ENCODE measurements at regions of chr2 and their contacts with region 1.

Region 1: DNA sequence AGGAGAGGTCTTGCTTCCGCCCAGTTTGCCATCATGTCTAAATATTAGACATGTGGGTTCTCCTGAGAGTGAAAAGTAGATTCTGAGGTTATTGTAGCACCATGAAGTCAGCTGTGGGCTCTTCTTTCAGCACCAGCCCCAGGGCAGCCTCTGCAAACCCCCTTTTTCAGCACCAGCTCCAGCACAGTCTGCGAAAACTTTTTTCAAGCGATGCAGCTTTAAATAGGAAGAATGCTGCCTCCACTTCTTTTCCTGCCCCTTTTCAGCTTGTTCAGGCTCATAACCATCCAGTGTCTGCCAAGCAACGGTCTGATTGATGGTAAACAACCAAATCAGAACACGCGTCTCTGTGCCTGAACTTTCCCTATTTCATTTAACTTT is at the start of gene COL5A2:
- DNase-seq: peak; percentile 71
- H3K4me3 ChIP-seq: peak within 1 kb of the TSS; percentile 66
- H3K4me3 Mint-ChIP-seq: peak within 1 kb of the TSS; percentile 92
- H3K27ac Mint-ChIP-seq: peak within 1 kb of the TSS; percentile 87
- H3K4me1 ChIP-seq: peaks cover 44% of the 10 kb centered on the region
- H3K4me1 Mint-ChIP-seq: peaks cover 37% of the 10 kb centered on the region
- H3K27me3 ChIP-seq: no peaks in the 10 kb centered on the region
- H3K27me3 Mint-ChIP-seq: no peaks in the 10 kb centered on the region
- CTCF ChIP-seq: no peak
- total RNA-seq, gene COL5A2: 190 and 244 TPM in 2 replicates

Region 2: GRCh38 chr2:189096769-189097447 is 82.7 kb before region 1 on chr2:
- CTCF ChIA-PET with region 1: no interaction called
- POLR2A ChIA-PET with region 1: no interaction called
- intact Hi-C with region 1: loop called (anchors 5 kb)
- DNase-seq: peak in 1 of 2 experiments; percentile 52
- H3K4me3 ChIP-seq: no peak overlapping the region
- H3K4me3 Mint-ChIP-seq: no peak overlapping the region
- H3K27ac Mint-ChIP-seq: peak overlapping the region; percentile 70
- H3K4me1 ChIP-seq: peaks cover 19% of the 10 kb centered on the region
- H3K4me1 Mint-ChIP-seq: peaks cover 21% of the 10 kb centered on the region
- H3K27me3 ChIP-seq: no peaks in the 10 kb centered on the region
- H3K27me3 Mint-ChIP-seq: no peaks in the 10 kb centered on the region
- CTCF ChIP-seq: no peak

Region 3: GRCh38 chr2:189142893-189143759 is 36.4 kb before region 1 on chr2:
- CTCF ChIA-PET with region 1: interaction called, 25 read pairs
- POLR2A ChIA-PET with region 1: no interaction called
- intact Hi-C with region 1: loop called (anchors 1 kb)
- DNase-seq: peak; percentile 75 to 80
- H3K4me3 ChIP-seq: no peak overlapping the region
- H3K4me3 Mint-ChIP-seq: no peak overlapping the region
- H3K27ac Mint-ChIP-seq: peak overlapping the region; percentile 17
- H3K4me1 ChIP-seq: peaks cover 12% of the 10 kb centered on the region
- H3K4me1 Mint-ChIP-seq: peaks cover 20% of the 10 kb centered on the region
- H3K27me3 ChIP-seq: no peaks in the 10 kb centered on the region
- H3K27me3 Mint-ChIP-seq: no peaks in the 10 kb centered on the region
- CTCF ChIP-seq: peak; percentile 93 to 99

Region 4: GRCh38 chr2:189163889-189164288 is 15.7 kb before region 1 on chr2:
- CTCF ChIA-PET with region 1: interaction called, 3 read pairs
- POLR2A ChIA-PET with region 1: no interaction called
- intact Hi-C with region 1: loop called (anchors 2 kb)
- DNase-seq: no peak
- H3K4me3 ChIP-seq: no peak overlapping the region
- H3K4me3 Mint-ChIP-seq: no peak overlapping the region
- H3K27ac Mint-ChIP-seq: peak overlapping the region; percentile 66
- H3K4me1 ChIP-seq: peaks cover 25% of the 10 kb centered on the region
- H3K4me1 Mint-ChIP-seq: peaks cover 22% of the 10 kb centered on the region
- H3K27me3 ChIP-seq: no peaks in the 10 kb centered on the region
- H3K27me3 Mint-ChIP-seq: no peaks in the 10 kb centered on the region
- CTCF ChIP-seq: no peak

Region 5: DNA sequence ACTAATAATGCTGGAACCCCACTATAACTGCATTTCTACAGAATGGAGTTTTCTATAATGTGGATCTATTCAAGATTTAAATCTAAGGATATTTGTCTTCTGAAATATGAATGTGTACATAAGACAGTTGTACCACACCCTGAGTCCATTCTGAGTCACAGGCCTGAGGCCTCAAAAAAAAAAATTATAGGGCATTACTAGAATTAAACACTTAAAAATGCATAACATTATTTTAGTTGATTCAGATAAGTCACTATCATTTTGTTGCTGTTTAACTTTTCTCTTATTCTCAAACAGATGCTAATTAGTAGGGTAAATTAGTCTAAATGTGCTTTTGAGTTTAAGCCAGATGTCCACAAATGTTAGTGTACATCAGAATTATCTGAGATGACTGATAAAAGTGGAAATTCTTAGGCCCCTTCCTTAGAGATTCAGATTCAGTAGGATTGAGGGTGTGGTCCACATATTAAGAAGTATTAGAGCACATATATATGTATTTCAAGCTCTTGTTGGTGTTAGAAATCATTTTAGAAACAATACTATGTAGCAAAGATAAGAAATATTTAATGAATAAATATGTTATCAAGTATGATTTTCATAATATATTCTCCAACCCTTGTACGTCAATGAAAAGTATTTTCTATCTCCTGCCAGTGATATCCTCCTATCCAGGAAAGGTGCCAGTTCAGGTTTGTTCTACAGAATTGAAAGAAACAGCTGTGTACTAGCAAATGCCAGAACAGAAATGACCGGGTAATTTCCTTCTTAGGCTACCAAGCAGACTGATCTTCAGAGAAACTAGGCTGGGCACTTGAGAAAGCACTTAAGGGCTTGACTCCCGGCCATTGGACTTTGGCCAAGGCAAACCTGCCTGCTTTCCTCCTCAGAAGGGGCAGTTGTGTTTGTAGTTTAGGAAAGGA is 42.6 kb after region 1 on chr2:
- CTCF ChIA-PET with region 1: no interaction called
- POLR2A ChIA-PET with region 1: no interaction called
- intact Hi-C with region 1: loop called (anchors 2 kb)
- DNase-seq: peak; percentile 18 to 43
- H3K4me3 ChIP-seq: no peak overlapping the region
- H3K4me3 Mint-ChIP-seq: no peak overlapping the region
- H3K27ac Mint-ChIP-seq: no peak overlapping the region
- H3K4me1 ChIP-seq: peaks cover 15% of the 10 kb centered on the region
- H3K4me1 Mint-ChIP-seq: peaks cover 22% of the 10 kb centered on the region
- H3K27me3 ChIP-seq: no peaks in the 10 kb centered on the region
- H3K27me3 Mint-ChIP-seq: no peaks in the 10 kb centered on the region
- CTCF ChIP-seq: no peak

Region 6: GRCh38 chr2:189287982-189288521 is 108.5 kb after region 1 on chr2:
- CTCF ChIA-PET with region 1: interaction called, 4 read pairs
- POLR2A ChIA-PET with region 1: no interaction called
- intact Hi-C with region 1: loop called (anchors 1 kb)
- DNase-seq: peak in 1 of 2 experiments; percentile 60
- H3K4me3 ChIP-seq: no peak overlapping the region
- H3K4me3 Mint-ChIP-seq: no peak overlapping the region
- H3K27ac Mint-ChIP-seq: no peak overlapping the region
- H3K4me1 ChIP-seq: peaks cover 5% of the 10 kb centered on the region; the same call in 1 of the 2 replicates
- H3K4me1 Mint-ChIP-seq: peaks cover 15% of the 10 kb centered on the region
- H3K27me3 ChIP-seq: no peaks in the 10 kb centered on the region
- H3K27me3 Mint-ChIP-seq: no peaks in the 10 kb centered on the region
- CTCF ChIP-seq: peak; percentile 38 to 64

Region 7: GRCh38 chr2:189379287-189379630 is 199.7 kb after region 1 on chr2:
- CTCF ChIA-PET with region 1: no interaction called
- POLR2A ChIA-PET with region 1: interaction called, 6 read pairs
- intact Hi-C with region 1: loop called (anchors 1 kb)
- DNase-seq: peak; percentile 74 to 81
- H3K4me3 ChIP-seq: no peak overlapping the region
- H3K4me3 Mint-ChIP-seq: peak overlapping the region; percentile 53
- H3K27ac Mint-ChIP-seq: peak overlapping the region; percentile 63
- H3K4me1 ChIP-seq: peaks cover 56% of the 10 kb centered on the region
- H3K4me1 Mint-ChIP-seq: peaks cover 29% of the 10 kb centered on the region
- H3K27me3 ChIP-seq: no peaks in the 10 kb centered on the region
- H3K27me3 Mint-ChIP-seq: no peaks in the 10 kb centered on the region
- CTCF ChIP-seq: no peak

Region 8: DNA sequence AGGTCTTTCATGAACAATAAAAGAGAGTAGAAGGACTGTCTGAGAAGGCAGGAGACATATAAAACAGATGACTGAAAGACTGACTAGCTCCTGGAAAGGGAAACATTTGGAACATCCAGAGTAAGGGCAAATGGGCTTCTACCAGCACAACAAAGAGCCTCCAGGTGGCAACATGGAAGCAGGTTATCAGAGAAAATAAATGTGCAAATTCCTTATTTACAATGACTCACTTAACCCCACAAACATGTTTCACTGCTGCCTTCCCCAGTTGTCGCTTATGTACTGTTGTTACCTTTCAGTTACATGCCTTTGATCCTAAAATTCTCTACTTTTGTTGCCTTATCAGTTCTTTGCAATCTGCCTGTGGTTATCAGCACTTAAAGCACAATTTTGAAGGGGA is 1023.0 kb after region 1 on chr2:
- CTCF ChIA-PET with region 1: no interaction called
- POLR2A ChIA-PET with region 1: no interaction called
- intact Hi-C with region 1: no loop called
- DNase-seq: peak in 1 of 2 experiments; percentile 21
- H3K4me3 ChIP-seq: no peak overlapping the region
- H3K4me3 Mint-ChIP-seq: no peak overlapping the region
- H3K27ac Mint-ChIP-seq: peak overlapping the region; percentile 42
- H3K4me1 ChIP-seq: peaks cover 26% of the 10 kb centered on the region
- H3K4me1 Mint-ChIP-seq: peaks cover 26% of the 10 kb centered on the region
- H3K27me3 ChIP-seq: no peaks in the 10 kb centered on the region
- H3K27me3 Mint-ChIP-seq: no peaks in the 10 kb centered on the region
- CTCF ChIP-seq: no peak